ENCODE measurements at regions of chr1 and their contacts with region 1.

Region 1: GRCh38 chr1:37486680-37487618 is 12.6 kb downstream of the ZC3H12A start:
- DNase-seq: peak; percentile 88
- H3K4me3 Mint-ChIP-seq: no peak overlapping the region
- H3K27ac Mint-ChIP-seq: peak overlapping the region; percentile 70
- H3K4me1 Mint-ChIP-seq: peaks cover 34% of the 10 kb centered on the region
- H3K27me3 Mint-ChIP-seq: no peaks in the 10 kb centered on the region
- CTCF ChIP-seq: peak; percentile 98

Region 2: GRCh38 chr1:37458528-37458927 is 28.4 kb before region 1 on chr1:
- CTCF ChIA-PET with region 1: interaction called, 31 read pairs
- intact Hi-C with region 1: loop called (anchors 1 kb)
- DNase-seq: no peak
- H3K4me3 Mint-ChIP-seq: no peak overlapping the region
- H3K27ac Mint-ChIP-seq: no peak overlapping the region
- H3K4me1 Mint-ChIP-seq: peaks cover 9% of the 10 kb centered on the region
- H3K27me3 Mint-ChIP-seq: no peaks in the 10 kb centered on the region
- CTCF ChIP-seq: no peak

Region 3: GRCh38 chr1:37474046-37474759 is 12.7 kb before region 1 on chr1 and contains the start of gene ZC3H12A:
- CTCF ChIA-PET with region 1: interaction called, 36 read pairs
- intact Hi-C with region 1: loop called (anchors 2 kb)
- DNase-seq: peak; percentile 97
- H3K4me3 Mint-ChIP-seq: peak within 1 kb of the TSS; percentile 90
- H3K27ac Mint-ChIP-seq: peak within 1 kb of the TSS; percentile 99
- H3K4me1 Mint-ChIP-seq: peaks cover 33% of the 10 kb centered on the region
- H3K27me3 Mint-ChIP-seq: no peaks in the 10 kb centered on the region
- CTCF ChIP-seq: no peak
- total RNA-seq, gene ZC3H12A: 64.4 and 94.1 TPM in 2 replicates

Region 4: GRCh38 chr1:37514350-37515184 is 27.6 kb after region 1 on chr1 and contains the start of gene MEAF6:
- CTCF ChIA-PET with region 1: interaction called, 11 read pairs
- intact Hi-C with region 1: no loop called
- DNase-seq: peak; percentile 89
- H3K4me3 Mint-ChIP-seq: peak within 1 kb of the TSS; percentile 71
- H3K27ac Mint-ChIP-seq: peak within 1 kb of the TSS; percentile 66
- H3K4me1 Mint-ChIP-seq: peaks cover 22% of the 10 kb centered on the region
- H3K27me3 Mint-ChIP-seq: no peaks in the 10 kb centered on the region
- CTCF ChIP-seq: peak; percentile 93
- total RNA-seq, gene MEAF6: 60.1 and 70.8 TPM in 2 replicates

Measured in Calu3 (cell line).